ENCODE measurements at regions of chr16 and their contacts with region 1.

Region 1: DNA sequence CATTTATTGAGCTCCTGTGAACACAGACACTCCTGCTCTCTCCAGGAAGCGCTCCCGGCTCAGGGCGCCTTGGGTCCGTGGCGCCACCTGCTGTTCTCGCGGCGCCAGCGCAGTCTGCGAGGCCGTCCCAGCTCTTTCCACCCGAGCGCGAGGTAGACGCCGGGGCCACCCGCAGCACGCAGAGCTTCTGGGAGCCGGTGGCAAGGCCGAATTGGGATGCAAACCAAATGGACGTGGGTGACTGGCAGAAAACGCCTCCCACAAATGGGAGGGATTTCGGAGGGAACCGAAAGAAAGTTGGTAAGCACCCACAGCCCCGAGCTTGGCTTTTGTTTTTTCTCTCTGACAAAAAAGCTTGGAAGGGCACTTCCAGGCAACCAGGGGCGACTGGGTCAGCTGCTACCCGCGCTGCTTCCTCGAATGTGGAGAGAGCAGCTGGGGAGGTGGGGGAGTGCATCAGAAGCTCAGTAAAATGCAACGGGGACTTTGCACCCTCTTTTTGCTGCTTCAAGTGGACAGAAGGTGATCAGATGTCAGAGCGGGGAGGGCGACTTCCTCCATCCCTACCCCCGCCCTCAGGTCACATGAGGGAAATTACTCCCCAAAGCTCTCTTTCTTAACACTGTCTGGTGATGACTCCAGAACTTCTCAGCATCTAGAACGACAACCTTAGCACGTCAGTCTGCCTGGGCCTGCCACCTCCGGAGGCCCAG is 13.5 kb upstream of the N4BP1 start:
- DNase-seq: peak; percentile 67 to 82 (median 72)
- H3K4me3 ChIP-seq: peak overlapping the region; percentile 78
- H3K4me3 Mint-ChIP-seq: peak overlapping the region; percentile 0 to 84 (median 69)
- H3K27ac ChIP-seq: no peak overlapping the region
- H3K27ac Mint-ChIP-seq: peak overlapping the region in 4 of 8 donors; percentile 47 to 82 (median 76)
- H3K4me1 ChIP-seq: peaks cover 18% of the 10 kb centered on the region
- H3K4me1 Mint-ChIP-seq: peaks cover 9 to 20% (median 17%) of the 10 kb centered on the region in 3 donors
- H3K27me3 ChIP-seq: no peaks in the 10 kb centered on the region
- H3K27me3 Mint-ChIP-seq: peaks cover 0 to 5% of the 10 kb centered on the region in 2 donors

Region 2: DNA sequence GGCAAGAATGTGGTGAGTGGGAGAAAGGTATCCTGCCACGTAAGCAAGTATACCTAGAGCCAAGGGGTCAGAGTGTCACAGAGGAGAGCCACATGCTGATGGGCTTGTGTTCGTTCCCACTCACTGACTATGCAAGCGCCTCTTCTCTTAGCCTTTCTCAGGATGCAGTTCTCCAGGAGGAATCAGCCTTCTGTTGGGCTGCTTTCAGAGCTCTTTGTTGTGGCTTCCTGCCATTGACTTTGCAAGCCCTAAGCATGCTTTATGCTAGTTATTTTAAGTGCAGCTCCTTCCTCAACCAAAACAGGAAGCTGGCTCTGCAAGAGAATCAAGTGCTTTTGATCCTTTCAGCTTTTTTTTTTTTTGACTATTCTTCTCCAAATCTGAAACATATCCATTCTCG is 304.8 kb before region 1 on chr16:
- CTCF ChIA-PET with region 1: interaction called, 12 read pairs
- POLR2A ChIA-PET with region 1: no interaction called
- DNase-seq: peak in 3 of 5 donors; percentile 47 to 71 (median 56)
- H3K4me3 ChIP-seq: peak overlapping the region; percentile 40
- H3K4me3 Mint-ChIP-seq: peak overlapping the region; percentile 26 to 75 (median 66)
- H3K27ac ChIP-seq: no peak overlapping the region
- H3K27ac Mint-ChIP-seq: peak overlapping the region; percentile 36 to 89 (median 72)
- H3K4me1 ChIP-seq: peaks cover 22% of the 10 kb centered on the region
- H3K4me1 Mint-ChIP-seq: peaks cover 28 to 48% (median 39%) of the 10 kb centered on the region in 3 donors
- H3K27me3 ChIP-seq: no peaks in the 10 kb centered on the region
- H3K27me3 Mint-ChIP-seq: no peaks in the 10 kb centered on the region

Region 3: DNA sequence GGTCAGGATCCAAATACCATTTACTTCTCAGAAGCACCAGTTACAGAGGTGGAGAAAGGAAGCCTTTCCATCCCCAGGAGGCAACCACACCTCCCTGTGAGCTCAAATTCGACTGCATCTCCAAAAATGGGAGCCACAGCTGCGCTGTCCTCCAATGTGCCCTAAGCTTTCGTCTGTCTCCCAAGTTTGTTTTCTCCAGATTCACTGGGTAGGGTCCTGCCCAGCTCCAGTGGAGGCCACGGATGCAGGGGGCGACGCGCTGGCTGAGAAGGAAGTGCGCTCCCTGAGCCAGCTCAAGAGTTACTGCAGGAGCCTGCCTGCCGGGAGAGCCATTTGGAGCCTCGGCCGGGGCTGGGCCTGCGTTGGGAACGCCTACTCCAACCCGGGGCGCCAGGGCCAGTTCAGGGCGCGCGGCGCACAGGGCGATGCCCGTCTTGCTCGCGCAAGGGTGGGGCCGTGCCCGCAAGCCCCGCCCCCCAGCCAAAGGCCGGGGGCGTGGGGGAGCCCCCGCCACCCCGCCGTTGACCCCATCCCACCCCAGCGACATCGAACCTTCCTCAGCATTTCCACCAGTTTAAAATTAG is 257.8 kb before region 1 on chr16:
- CTCF ChIA-PET with region 1: interaction called, 22 read pairs
- POLR2A ChIA-PET with region 1: interaction called, 3 read pairs
- DNase-seq: peak; percentile 59 to 81 (median 72)
- H3K4me3 ChIP-seq: peak overlapping the region; percentile 69
- H3K4me3 Mint-ChIP-seq: peak overlapping the region; percentile 85 to 96 (median 89)
- H3K27ac ChIP-seq: peak overlapping the region; percentile 90
- H3K27ac Mint-ChIP-seq: peak overlapping the region; percentile 41 to 95 (median 86)
- H3K4me1 ChIP-seq: peaks cover 22% of the 10 kb centered on the region
- H3K4me1 Mint-ChIP-seq: peaks cover 24 to 42% (median 40%) of the 10 kb centered on the region in 3 donors
- H3K27me3 ChIP-seq: no peaks in the 10 kb centered on the region
- H3K27me3 Mint-ChIP-seq: no peaks in the 10 kb centered on the region

Region 4: DNA sequence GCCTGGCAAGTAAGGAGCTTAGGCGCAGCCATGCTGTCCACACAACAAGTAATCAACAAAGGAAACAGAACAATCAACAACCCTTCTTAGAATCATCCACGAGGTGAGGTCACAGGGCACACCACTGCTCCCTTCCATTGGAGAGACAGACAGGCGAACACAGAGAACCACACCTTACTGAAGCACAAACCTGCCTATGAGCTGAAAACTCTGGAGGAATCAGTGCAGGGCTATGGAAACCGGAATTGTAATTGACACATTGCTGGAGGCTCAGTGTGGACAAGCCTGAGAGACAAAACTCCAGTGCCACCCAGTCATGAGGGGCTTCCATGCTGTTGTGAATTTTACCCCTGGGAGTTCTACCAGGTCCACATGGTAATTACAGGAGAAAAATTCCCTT is 110.9 kb before region 1 on chr16:
- CTCF ChIA-PET with region 1: no interaction called
- POLR2A ChIA-PET with region 1: no interaction called
- DNase-seq: no peak
- H3K4me3 ChIP-seq: no peak overlapping the region
- H3K4me3 Mint-ChIP-seq: no peak overlapping the region
- H3K27ac ChIP-seq: no peak overlapping the region
- H3K27ac Mint-ChIP-seq: no peak overlapping the region
- H3K4me1 ChIP-seq: no peaks in the 10 kb centered on the region
- H3K4me1 Mint-ChIP-seq: no peaks in the 10 kb centered on the region
- H3K27me3 ChIP-seq: no peaks in the 10 kb centered on the region
- H3K27me3 Mint-ChIP-seq: peaks cover 0 to 4% of the 10 kb centered on the region in 2 donors

Region 5: GRCh38 chr16:48526058-48526957 is 97.2 kb before region 1 on chr16:
- CTCF ChIA-PET with region 1: interaction called, 31 read pairs
- POLR2A ChIA-PET with region 1: no interaction called
- DNase-seq: no peak
- H3K4me3 ChIP-seq: no peak overlapping the region
- H3K4me3 Mint-ChIP-seq: no peak overlapping the region
- H3K27ac ChIP-seq: no peak overlapping the region
- H3K27ac Mint-ChIP-seq: peak overlapping the region in 1 of 8 donors; percentile 10
- H3K4me1 ChIP-seq: no peaks in the 10 kb centered on the region
- H3K4me1 Mint-ChIP-seq: no peaks in the 10 kb centered on the region
- H3K27me3 ChIP-seq: no peaks in the 10 kb centered on the region
- H3K27me3 Mint-ChIP-seq: no peaks in the 10 kb centered on the region

Region 6: DNA sequence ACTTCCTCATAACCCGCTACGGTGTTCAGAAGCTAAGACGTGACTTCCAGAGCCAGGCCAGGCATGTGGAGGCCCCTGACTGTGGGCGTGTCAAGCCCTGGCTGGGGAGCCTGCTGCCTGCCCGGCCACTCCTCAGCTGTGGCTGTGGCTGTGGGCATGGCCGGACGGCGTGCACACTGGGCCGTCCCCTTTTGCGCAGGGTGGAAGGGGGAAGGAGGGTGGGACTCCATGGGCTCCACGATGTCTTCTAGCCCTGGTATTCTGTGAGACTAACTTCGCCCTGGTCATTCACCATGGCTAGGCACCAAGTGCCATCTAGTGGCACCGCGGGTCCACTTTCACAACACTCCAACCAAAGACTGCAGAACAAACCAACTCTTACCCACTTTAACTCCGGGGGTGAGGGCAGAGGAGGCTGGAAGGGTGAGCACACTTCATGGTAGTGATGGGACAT is 81.4 kb before region 1 on chr16:
- CTCF ChIA-PET with region 1: interaction called, 27 read pairs
- POLR2A ChIA-PET with region 1: no interaction called
- DNase-seq: no peak
- H3K4me3 ChIP-seq: no peak overlapping the region
- H3K4me3 Mint-ChIP-seq: no peak overlapping the region
- H3K27ac ChIP-seq: no peak overlapping the region
- H3K27ac Mint-ChIP-seq: no peak overlapping the region
- H3K4me1 ChIP-seq: peaks cover 5% of the 10 kb centered on the region
- H3K4me1 Mint-ChIP-seq: peaks cover 9 to 25% (median 11%) of the 10 kb centered on the region in 3 donors
- H3K27me3 ChIP-seq: no peaks in the 10 kb centered on the region
- H3K27me3 Mint-ChIP-seq: no peaks in the 10 kb centered on the region

Region 7: GRCh38 chr16:48576927-48577326 is 46.5 kb before region 1 on chr16:
- CTCF ChIA-PET with region 1: interaction called, 15 read pairs
- POLR2A ChIA-PET with region 1: no interaction called
- DNase-seq: no peak
- H3K4me3 ChIP-seq: no peak overlapping the region
- H3K4me3 Mint-ChIP-seq: peak overlapping the region in 2 of 7 donors; percentile 22 to 31
- H3K27ac ChIP-seq: no peak overlapping the region
- H3K27ac Mint-ChIP-seq: peak overlapping the region in 5 of 8 donors; percentile 4 to 44 (median 24)
- H3K4me1 ChIP-seq: peaks cover 34% of the 10 kb centered on the region
- H3K4me1 Mint-ChIP-seq: peaks cover 65 to 91% (median 72%) of the 10 kb centered on the region in 3 donors
- H3K27me3 ChIP-seq: no peaks in the 10 kb centered on the region
- H3K27me3 Mint-ChIP-seq: no peaks in the 10 kb centered on the region

Region 8: DNA sequence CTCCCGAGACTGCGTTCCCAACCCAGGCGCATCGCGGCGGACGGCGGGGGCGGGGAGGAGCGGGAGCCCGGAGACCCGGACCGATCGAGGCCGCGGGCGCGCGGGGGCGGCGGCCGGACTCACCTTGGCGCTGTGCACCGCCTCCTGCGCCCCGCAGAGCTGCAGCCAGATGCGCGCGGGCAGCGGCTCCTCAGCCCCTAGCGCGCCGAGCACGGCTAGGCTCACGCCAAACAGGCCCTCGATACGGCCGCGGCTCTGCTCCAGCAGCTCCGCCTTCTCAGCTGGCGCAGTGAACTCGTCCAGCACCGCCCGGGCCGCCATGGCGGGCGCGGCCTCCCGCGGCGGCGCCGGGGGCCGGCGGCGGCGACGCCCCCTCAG is 13.8 kb before region 1 on chr16:
- CTCF ChIA-PET with region 1: interaction called, 89 read pairs
- POLR2A ChIA-PET with region 1: interaction called, 11 read pairs
- DNase-seq: no peak
- H3K4me3 ChIP-seq: peak overlapping the region; percentile 68
- H3K4me3 Mint-ChIP-seq: no peak overlapping the region
- H3K27ac ChIP-seq: peak overlapping the region; percentile 97
- H3K27ac Mint-ChIP-seq: peak overlapping the region; percentile 89 to 98 (median 94)
- H3K4me1 ChIP-seq: peaks cover 83% of the 10 kb centered on the region
- H3K4me1 Mint-ChIP-seq: peaks cover 41 to 45% (median 41%) of the 10 kb centered on the region in 3 donors
- H3K27me3 ChIP-seq: no peaks in the 10 kb centered on the region
- H3K27me3 Mint-ChIP-seq: peaks cover 0 to 6% of the 10 kb centered on the region in 2 donors

Region 9: GRCh38 chr16:48647794-48648193 is 24.3 kb after region 1 on chr16:
- CTCF ChIA-PET with region 1: no interaction called
- POLR2A ChIA-PET with region 1: no interaction called
- DNase-seq: no peak
- H3K4me3 ChIP-seq: no peak overlapping the region
- H3K4me3 Mint-ChIP-seq: no peak overlapping the region
- H3K27ac ChIP-seq: no peak overlapping the region
- H3K27ac Mint-ChIP-seq: no peak overlapping the region
- H3K4me1 ChIP-seq: no peaks in the 10 kb centered on the region
- H3K4me1 Mint-ChIP-seq: no peaks in the 10 kb centered on the region
- H3K27me3 ChIP-seq: no peaks in the 10 kb centered on the region
- H3K27me3 Mint-ChIP-seq: peaks cover 10 to 23% of the 10 kb centered on the region in 2 donors